A549 (cell line): ENCODE measurements at regions of chr19 and their contacts with region 1.

Region 1: GRCh38 chr19:14786421-14786851 is 8.1 kb upstream of the ADGRE2 start:
- DNase-seq: peak in 1 of 2 experiments; percentile 25
- ATAC-seq: peak; percentile 47 to 74; a peak in 4 of 6 replicates
- H3K4me3 ChIP-seq: no peak overlapping the region
- H3K27ac ChIP-seq: peak overlapping the region in 1 of 2 experiments; percentile 64; a peak in 2 of 6 replicates
- H3K4me1 ChIP-seq: no peaks in the 10 kb centered on the region
- CTCF ChIP-seq: peak; percentile 55
- EP300 ChIP-seq: no peak
- POLR2A ChIP-seq: no peak
- RAD21 ChIP-seq: peak; percentile 63 to 72

Region 2: DNA sequence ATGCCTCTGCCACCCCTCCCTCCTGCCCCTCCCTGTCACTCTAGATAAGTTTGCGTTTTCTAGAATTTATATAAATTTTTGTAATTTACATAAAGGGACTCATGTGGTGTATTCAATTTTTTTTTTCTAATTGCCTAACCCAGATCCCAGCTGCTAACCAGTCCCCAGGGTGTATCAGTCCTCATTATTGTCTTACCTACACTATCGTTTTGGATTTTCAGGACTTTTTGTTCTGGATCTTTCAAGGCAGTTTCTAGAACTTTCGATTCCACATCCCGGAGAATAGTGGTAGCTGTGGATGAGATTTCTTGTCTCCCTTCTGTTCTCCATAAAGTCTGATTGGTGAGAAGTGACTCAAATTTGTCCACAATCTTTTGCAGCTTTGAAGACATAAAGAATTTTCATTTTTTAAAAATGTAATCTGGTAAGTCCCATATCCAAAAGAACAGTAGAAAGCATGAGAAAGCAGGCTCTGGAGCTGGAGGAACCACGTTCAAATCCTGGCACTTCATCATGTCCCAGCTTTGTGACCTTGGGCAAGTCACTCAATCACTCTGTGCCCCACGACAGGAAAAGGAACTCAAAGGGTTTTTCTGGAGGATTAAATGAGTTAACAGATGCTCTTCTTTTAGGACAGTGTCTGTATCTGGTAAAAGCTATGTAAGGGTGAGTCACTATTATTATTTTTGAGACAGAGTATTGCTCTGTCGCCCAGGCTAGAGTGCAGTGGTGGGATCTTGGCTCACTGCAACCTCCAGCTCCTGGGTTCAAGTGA is 131.5 kb before region 1 on chr19:
- CTCF ChIA-PET with region 1: no interaction called
- POLR2A ChIA-PET with region 1: no interaction called
- DNase-seq: no peak
- ATAC-seq: no peak
- H3K4me3 ChIP-seq: no peak overlapping the region
- H3K27ac ChIP-seq: no peak overlapping the region
- H3K4me1 ChIP-seq: no peaks in the 10 kb centered on the region
- CTCF ChIP-seq: no peak
- EP300 ChIP-seq: no peak
- POLR2A ChIP-seq: no peak
- RAD21 ChIP-seq: no peak

Region 3: GRCh38 chr19:14775869-14776586 is 10.4 kb before region 1 on chr19:
- CTCF ChIA-PET with region 1: interaction called, 14 read pairs
- POLR2A ChIA-PET with region 1: no interaction called
- DNase-seq: no peak
- ATAC-seq: peak; percentile 21 to 60; a peak in 3 of 6 replicates
- H3K4me3 ChIP-seq: peak overlapping the region; percentile 43
- H3K27ac ChIP-seq: peak overlapping the region in 1 of 2 experiments; percentile 75; a peak in 4 of 6 replicates
- H3K4me1 ChIP-seq: no peaks in the 10 kb centered on the region
- CTCF ChIP-seq: no peak
- EP300 ChIP-seq: no peak
- POLR2A ChIP-seq: no peak
- RAD21 ChIP-seq: no peak

Region 4: DNA sequence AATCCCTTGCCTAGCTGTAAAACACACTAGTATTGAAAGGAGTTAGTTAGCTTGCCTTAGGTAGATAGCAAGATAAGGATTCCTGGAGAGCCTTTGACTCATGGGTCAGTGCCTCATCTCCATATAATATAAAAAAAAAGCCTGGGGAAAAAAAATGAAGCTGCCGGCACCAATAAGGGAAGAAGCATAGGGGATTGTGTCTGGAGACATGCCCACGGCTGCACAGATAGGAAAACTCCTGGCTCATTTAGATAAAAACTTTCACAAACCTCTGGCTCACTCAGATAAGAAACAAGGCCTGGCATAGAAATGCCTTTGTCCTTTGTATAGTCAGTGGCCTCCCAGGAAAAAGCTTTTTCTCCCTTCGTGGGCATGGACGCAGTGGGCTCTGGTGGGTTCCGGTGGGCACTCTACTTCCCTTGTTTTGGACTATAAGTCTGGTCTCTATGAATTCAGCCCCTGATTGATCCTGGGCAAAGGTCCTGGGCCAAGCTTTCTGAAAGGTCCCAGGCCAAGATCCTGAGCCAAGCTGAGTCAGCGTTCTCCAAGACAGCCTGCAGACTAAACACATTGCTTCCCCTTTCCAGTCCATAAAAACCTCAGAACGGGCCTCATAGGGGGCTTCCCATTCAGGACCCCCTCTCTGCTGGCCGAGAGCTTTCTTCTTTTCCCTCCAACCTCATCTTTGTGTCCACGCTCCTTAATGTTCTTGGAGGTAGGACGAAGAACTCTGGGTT is 104.4 kb after region 1 on chr19:
- CTCF ChIA-PET with region 1: interaction called, 12 read pairs
- POLR2A ChIA-PET with region 1: no interaction called
- DNase-seq: no peak
- ATAC-seq: no peak
- H3K4me3 ChIP-seq: no peak overlapping the region
- H3K27ac ChIP-seq: no peak overlapping the region
- H3K4me1 ChIP-seq: no peaks in the 10 kb centered on the region
- CTCF ChIP-seq: no peak
- EP300 ChIP-seq: no peak
- POLR2A ChIP-seq: no peak
- RAD21 ChIP-seq: no peak